Esophagus muscularis mucosa (tissue), 4 donors: ENCODE measurements at regions of chr1 and their contacts with region 1.

Region 1: GRCh38 chr1:221487781-221488524 is 253.9 kb downstream of the DUSP10 start:
- DNase-seq: no peak
- H3K4me3 ChIP-seq: no peak overlapping the region
- H3K27ac ChIP-seq: no peak overlapping the region
- H3K4me1 ChIP-seq: peaks cover 0 to 4% (median 0%) of the 10 kb centered on the region in 4 donors
- H3K27me3 ChIP-seq: no peaks in the 10 kb centered on the region
- CTCF ChIP-seq: no peak
- EP300 ChIP-seq: no peak
- POLR2A ChIP-seq: no peak

Region 2: DNA sequence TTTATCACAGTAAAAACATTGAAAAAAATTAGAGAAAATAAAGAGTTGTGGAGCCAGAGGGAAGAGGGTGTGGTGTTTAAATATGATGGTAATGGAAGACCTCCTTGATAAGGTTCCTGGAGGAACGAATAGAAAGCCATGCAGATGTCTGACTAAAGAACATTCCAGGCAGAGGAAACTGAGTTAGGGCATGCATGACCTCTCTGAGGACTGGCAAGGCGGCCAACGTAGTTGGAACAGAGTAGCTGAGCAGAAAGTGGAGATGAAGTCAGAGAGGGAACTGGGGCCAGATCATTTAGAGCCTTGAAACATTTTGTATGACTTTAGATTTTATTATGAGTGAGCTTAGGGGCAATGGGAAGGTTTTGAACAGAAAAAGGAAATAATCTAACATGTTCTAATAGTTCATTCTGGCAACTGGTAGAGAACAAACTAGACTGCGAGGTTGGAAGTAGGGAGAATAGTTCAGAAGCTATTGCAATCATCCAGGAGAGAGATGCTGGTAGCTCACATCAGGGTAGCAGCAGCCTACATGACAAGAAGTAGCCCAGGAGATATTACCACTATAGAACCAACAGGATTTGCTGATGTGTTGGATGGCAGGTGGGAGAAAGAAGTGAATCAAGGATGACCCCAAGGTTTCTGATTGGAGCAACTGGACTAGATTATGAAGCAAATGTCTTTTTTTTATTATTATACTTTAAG is 231.0 kb before region 1 on chr1:
- intact Hi-C with region 1: no loop called
- DNase-seq: no peak
- H3K4me3 ChIP-seq: no peak overlapping the region
- H3K27ac ChIP-seq: no peak overlapping the region
- H3K4me1 ChIP-seq: no peaks in the 10 kb centered on the region
- H3K27me3 ChIP-seq: no peaks in the 10 kb centered on the region
- CTCF ChIP-seq: no peak
- EP300 ChIP-seq: no peak
- POLR2A ChIP-seq: no peak

Region 3: GRCh38 chr1:221567859-221568507 is 80.0 kb after region 1 on chr1:
- intact Hi-C with region 1: no loop called
- DNase-seq: no peak
- H3K4me3 ChIP-seq: no peak overlapping the region
- H3K27ac ChIP-seq: no peak overlapping the region
- H3K4me1 ChIP-seq: peaks cover 0 to 7% (median 0%) of the 10 kb centered on the region in 4 donors
- H3K27me3 ChIP-seq: no peaks in the 10 kb centered on the region
- CTCF ChIP-seq: no peak
- EP300 ChIP-seq: no peak
- POLR2A ChIP-seq: no peak

Region 4: DNA sequence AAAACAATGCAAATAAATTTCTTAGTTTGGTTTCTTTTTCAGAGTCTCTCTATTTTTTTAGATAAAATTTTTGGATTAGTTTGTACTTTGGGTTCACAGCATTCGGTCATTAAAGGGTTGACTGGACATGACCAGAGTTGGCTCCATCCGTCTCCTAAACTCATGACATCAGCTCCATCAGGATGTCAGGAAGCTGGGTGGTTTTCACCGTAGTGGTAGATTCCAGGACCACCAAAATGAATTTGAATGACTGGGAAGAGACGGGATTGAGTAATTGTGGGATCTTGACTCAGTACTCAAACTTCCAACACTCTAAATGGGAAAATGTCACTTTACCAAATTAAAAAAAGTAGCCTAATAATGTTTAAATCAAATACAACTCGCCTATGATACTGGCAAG is 533.2 kb after region 1 on chr1:
- intact Hi-C with region 1: loop called (anchors 10 kb)
- DNase-seq: peak; percentile 55
- H3K4me3 ChIP-seq: no peak overlapping the region
- H3K27ac ChIP-seq: no peak overlapping the region
- H3K4me1 ChIP-seq: no peaks in the 10 kb centered on the region
- H3K27me3 ChIP-seq: no peaks in the 10 kb centered on the region
- CTCF ChIP-seq: no peak
- EP300 ChIP-seq: no peak
- POLR2A ChIP-seq: no peak